Upper lobe of right lung (tissue), 1 donor: ENCODE measurements at regions of chr22 and their contacts with region 1.

Region 1: DNA sequence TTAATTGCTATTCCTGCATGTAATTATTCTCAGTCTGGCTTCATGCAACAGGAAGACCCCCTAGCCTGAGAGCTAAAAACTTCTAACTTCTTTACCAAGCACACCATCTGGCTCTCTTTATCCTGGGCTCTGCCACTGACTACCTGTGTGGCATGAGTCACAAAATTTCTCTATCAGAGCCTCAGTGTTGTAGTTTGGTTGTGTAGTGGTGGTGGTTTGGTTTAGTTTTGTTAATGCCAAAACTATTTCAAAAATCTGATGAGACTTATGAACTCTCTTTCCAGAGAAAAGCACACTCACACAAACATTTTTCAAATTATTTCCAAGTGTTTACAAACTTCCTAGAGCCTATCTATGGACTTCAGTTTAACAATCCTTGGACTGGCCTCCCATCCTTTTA is 7.5 kb upstream of the IL17RA start:
- DNase-seq: no peak
- ATAC-seq: no peak
- H3K4me3 ChIP-seq: no peak overlapping the region
- H3K27ac ChIP-seq: no peak overlapping the region
- H3K4me1 ChIP-seq: no peaks in the 10 kb centered on the region
- H3K27me3 ChIP-seq: no peaks in the 10 kb centered on the region
- CTCF ChIP-seq: no peak

Region 2: DNA sequence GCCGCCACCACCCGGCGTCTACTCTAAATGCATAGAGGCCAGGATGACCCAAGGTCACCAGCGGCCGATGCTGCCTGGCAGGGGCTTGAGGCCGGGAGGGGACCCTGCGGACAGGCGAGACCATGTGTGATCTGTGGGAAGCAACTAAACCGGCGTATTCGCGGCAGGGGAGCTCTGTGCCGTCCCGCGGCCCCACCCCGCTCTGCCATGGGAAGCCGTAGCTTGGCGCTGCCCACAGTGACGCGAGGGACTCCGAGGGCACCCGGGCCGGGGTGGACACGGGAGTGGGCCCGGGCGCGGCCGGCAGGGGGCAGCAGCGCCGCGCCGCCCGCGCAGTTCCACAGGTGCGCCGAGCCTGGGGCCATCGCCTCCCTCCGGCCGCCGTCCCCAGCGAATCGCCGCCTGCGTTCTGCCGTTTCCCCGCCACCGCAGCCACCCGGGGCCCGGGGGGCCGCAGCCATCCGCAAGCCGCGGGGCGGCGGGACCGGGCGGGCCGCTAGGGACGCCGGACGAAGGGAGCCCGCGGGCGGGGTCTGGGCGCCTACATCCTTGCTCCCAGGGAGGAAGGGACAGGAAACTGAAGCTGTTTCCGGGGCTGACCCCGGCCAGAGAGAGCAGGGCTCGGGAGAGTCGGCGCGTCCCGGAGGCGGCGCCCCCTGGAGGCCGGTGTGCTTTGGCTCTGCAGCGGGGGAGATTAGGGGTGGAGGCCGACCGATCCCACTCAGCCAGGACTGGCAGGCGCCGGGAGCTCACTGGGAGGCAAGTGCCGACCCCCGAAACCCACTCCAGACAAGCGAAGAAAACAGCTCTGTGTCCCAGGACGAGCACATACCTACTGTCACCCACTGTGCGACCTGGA is 94.3 kb after region 1 on chr22:
- intact Hi-C with region 1: loop called (anchors 10 kb)
- DNase-seq: peak; percentile 97
- ATAC-seq: peak; percentile 98
- H3K4me3 ChIP-seq: peak overlapping the region; percentile 71
- H3K27ac ChIP-seq: peak overlapping the region; percentile 98
- H3K4me1 ChIP-seq: peaks cover 11% of the 10 kb centered on the region
- H3K27me3 ChIP-seq: no peaks in the 10 kb centered on the region
- CTCF ChIP-seq: peak; percentile 70

Region 3: GRCh38 chr22:17501679-17502285 is 424.5 kb after region 1 on chr22:
- intact Hi-C with region 1: loop called (anchors 10 kb)
- DNase-seq: no peak
- ATAC-seq: peak; percentile 85
- H3K4me3 ChIP-seq: no peak overlapping the region
- H3K27ac ChIP-seq: no peak overlapping the region
- H3K4me1 ChIP-seq: no peaks in the 10 kb centered on the region
- H3K27me3 ChIP-seq: no peaks in the 10 kb centered on the region
- CTCF ChIP-seq: peak; percentile 65